Heart left ventricle (tissue), 16 donors: ENCODE measurements at regions of chr19 and their contacts with region 1.

Region 1: DNA sequence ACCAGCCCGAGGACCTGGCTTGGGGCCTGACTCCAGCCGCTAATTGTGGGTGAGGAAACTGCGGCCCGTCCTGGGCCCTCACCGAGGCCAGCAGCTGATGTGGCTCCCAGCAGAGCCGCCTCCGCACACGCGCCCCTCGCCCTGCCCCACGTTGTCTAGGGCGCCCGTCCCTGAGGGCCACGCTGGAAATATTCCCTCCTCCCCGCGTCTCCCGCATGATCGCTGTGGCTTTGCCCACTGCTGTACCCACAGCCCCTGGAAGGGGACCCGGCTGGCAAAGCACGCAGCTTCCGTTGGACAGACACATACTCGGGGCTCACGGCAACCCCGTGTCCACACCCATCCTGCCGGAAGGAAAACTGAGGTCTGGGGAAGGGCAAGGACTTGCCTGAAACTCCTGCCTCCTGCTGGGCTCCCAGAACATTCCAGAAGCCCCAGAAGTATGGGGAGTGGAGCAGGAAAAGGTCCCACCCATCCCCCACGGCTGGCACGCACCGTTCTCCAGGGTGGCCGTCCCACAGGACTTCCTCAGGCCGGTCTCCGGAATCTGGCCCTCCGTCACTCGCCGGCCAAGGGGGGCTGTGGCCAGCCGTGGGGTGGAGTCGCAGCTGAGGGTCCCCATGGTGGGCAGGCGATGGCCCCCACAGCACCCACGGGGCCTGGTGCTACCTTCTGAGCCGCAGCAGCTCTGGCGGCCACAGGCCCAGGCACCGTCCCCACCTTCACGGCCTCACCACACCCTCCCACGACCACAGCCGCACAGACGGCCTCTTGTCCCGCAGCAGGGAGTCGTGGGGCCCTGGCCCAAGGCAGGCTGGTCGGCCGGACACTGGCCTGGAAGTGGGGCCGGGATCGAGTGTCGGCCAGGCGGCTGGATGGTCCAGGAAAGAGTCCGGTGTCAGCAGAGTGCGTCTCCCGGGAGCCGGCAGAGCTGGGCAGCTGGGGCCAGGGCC is 13.6 kb upstream of the SHC2 start:
- DNase-seq: peak in 4 of 5 donors; percentile 45 to 75 (median 56)
- ATAC-seq: peak; percentile 58 to 85 (median 74)
- H3K4me3 ChIP-seq: peak overlapping the region in 7 of 12 donors; percentile 3 to 38 (median 27)
- H3K27ac ChIP-seq: peak overlapping the region in 10 of 12 donors; percentile 13 to 85 (median 68)
- H3K4me1 ChIP-seq: peaks cover 0 to 14% (median 6%) of the 10 kb centered on the region in 12 donors
- H3K27me3 ChIP-seq: no peaks in the 10 kb centered on the region
- CTCF ChIP-seq: peak in 3 of 12 donors; percentile 9 to 23 (median 23)
- POLR2A ChIP-seq: no peak

Region 2: GRCh38 chr19:392375-392970 is 81.9 kb before region 1 on chr19:
- intact Hi-C with region 1: loop called in 1 of 10 experiments (anchors 10 kb)
- DNase-seq: no peak
- ATAC-seq: no peak
- H3K4me3 ChIP-seq: no peak overlapping the region
- H3K27ac ChIP-seq: no peak overlapping the region
- H3K4me1 ChIP-seq: no peaks in the 10 kb centered on the region
- H3K27me3 ChIP-seq: peaks cover 0 to 29% (median 3%) of the 10 kb centered on the region in 9 donors
- CTCF ChIP-seq: no peak
- POLR2A ChIP-seq: no peak